ENCODE measurements at regions of chr2 and their contacts with region 1.

Region 1: GRCh38 chr2:231514103-231514950 is 15.9 kb downstream of the NMUR1 start:
- DNase-seq: peak; percentile 98

Region 2: GRCh38 chr2:231482806-231483391 is 31.4 kb before region 1 on chr2:
- CTCF ChIA-PET with region 1: interaction called, 4 read pairs
- POLR2A ChIA-PET with region 1: interaction called, 10 read pairs
- DNase-seq: peak; percentile 89

Region 3: GRCh38 chr2:231503766-231504165 is 10.6 kb before region 1 on chr2:
- CTCF ChIA-PET with region 1: interaction called, 7 read pairs
- POLR2A ChIA-PET with region 1: interaction called, 12 read pairs
- DNase-seq: no peak